CD14-positive monocyte (primary cell): ENCODE measurements at regions of chr1 and their contacts with region 1.

Region 1: GRCh38 chr1:100037927-100038659 is 68.3 kb downstream of the SLC35A3 start:
- DNase-seq: peak; percentile 82 to 88 (median 86)
- H3K4me3 ChIP-seq: peak overlapping the region; percentile 87 to 97 (median 90)
- H3K4me3 Mint-ChIP-seq: peak overlapping the region; percentile 96 to 97
- H3K27ac ChIP-seq: peak overlapping the region; percentile 94 to 97
- H3K27ac Mint-ChIP-seq: peak overlapping the region; percentile 96 to 99 (median 98)
- H3K4me1 ChIP-seq: peaks cover 24 to 28% of the 10 kb centered on the region in 2 donors
- H3K4me1 Mint-ChIP-seq: peaks cover 36% of the 10 kb centered on the region
- H3K27me3 ChIP-seq: no peaks in the 10 kb centered on the region
- H3K27me3 Mint-ChIP-seq: peaks cover 0 to 4% (median 0%) of the 10 kb centered on the region in 3 donors
- CTCF ChIP-seq: no peak

Region 2: GRCh38 chr1:100050139-100050538 is 12.0 kb after region 1 on chr1:
- intact Hi-C with region 1: loop called in 1 of 2 experiments (anchors 1 kb)
- DNase-seq: no peak
- H3K4me3 ChIP-seq: no peak overlapping the region
- H3K4me3 Mint-ChIP-seq: no peak overlapping the region
- H3K27ac ChIP-seq: peak overlapping the region in 1 of 2 donors; percentile 42
- H3K27ac Mint-ChIP-seq: peak overlapping the region in 5 of 7 donors; percentile 40 to 67 (median 54)
- H3K4me1 ChIP-seq: peaks cover 43 to 63% of the 10 kb centered on the region in 2 donors
- H3K4me1 Mint-ChIP-seq: peaks cover 52% of the 10 kb centered on the region
- H3K27me3 ChIP-seq: no peaks in the 10 kb centered on the region
- H3K27me3 Mint-ChIP-seq: no peaks in the 10 kb centered on the region
- CTCF ChIP-seq: no peak

Region 3: GRCh38 chr1:100132566-100133477 is 94.7 kb after region 1 on chr1 and contains the starts of genes SASS6 and TRMT13:
- intact Hi-C with region 1: loop called (anchors 5 kb)
- DNase-seq: peak; percentile 94 to 97 (median 97)
- H3K4me3 ChIP-seq: peak within 1 kb of the TSS; percentile 79 to 99 (median 94)
- H3K4me3 Mint-ChIP-seq: peak within 1 kb of the TSS; percentile 97 to 99
- H3K27ac ChIP-seq: peak within 1 kb of the TSS; percentile 37 to 85
- H3K27ac Mint-ChIP-seq: peak within 1 kb of the TSS; percentile 91 to 97 (median 94)
- H3K4me1 ChIP-seq: peaks cover 14 to 22% of the 10 kb centered on the region in 2 donors
- H3K4me1 Mint-ChIP-seq: peaks cover 21% of the 10 kb centered on the region
- H3K27me3 ChIP-seq: no peaks in the 10 kb centered on the region
- H3K27me3 Mint-ChIP-seq: no peaks in the 10 kb centered on the region
- CTCF ChIP-seq: no peak
- polyA plus RNA-seq, gene SASS6: 0.53 to 0.98 (median 0.93) TPM
- polyA plus RNA-seq, gene TRMT13: 2.2 to 8.1 (median 2.3) TPM

Region 4: DNA sequence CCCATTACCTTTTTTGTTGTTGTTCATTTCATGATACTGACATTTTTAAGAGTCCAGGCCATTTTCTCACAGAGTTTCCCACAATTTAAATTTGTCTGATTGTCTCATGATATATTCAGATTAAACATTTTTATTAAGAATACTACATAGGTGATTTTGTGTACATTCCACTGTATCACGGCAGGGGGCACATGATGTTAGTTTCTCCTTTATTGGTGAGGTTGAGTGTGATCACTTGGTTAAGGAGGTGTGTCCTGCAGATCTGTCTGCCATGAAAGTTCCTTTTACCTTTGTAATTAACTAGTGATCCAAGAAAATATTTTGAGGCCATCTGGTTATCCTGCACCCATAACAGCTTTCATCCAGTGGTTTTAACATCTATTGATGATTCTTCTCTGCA is 239.8 kb after region 1 on chr1:
- intact Hi-C with region 1: no loop called
- DNase-seq: no peak
- H3K4me3 ChIP-seq: no peak overlapping the region
- H3K4me3 Mint-ChIP-seq: no peak overlapping the region
- H3K27ac ChIP-seq: peak overlapping the region in 1 of 2 donors; percentile 12
- H3K27ac Mint-ChIP-seq: no peak overlapping the region
- H3K4me1 ChIP-seq: no peaks in the 10 kb centered on the region
- H3K4me1 Mint-ChIP-seq: no peaks in the 10 kb centered on the region
- H3K27me3 ChIP-seq: no peaks in the 10 kb centered on the region
- H3K27me3 Mint-ChIP-seq: no peaks in the 10 kb centered on the region
- CTCF ChIP-seq: no peak

Region 5: GRCh38 chr1:100895540-100896483 is 857.7 kb after region 1 on chr1 and contains the start of gene SLC30A7:
- intact Hi-C with region 1: loop called in 1 of 2 experiments (anchors 10 kb)
- DNase-seq: peak; percentile 88 to 96 (median 88)
- H3K4me3 ChIP-seq: peak within 1 kb of the TSS; percentile 82 to 95 (median 86)
- H3K4me3 Mint-ChIP-seq: peak within 1 kb of the TSS; percentile 92 to 99
- H3K27ac ChIP-seq: peak within 1 kb of the TSS; percentile 95 to 100
- H3K27ac Mint-ChIP-seq: peak within 1 kb of the TSS; percentile 95 to 100 (median 99)
- H3K4me1 ChIP-seq: peaks cover 6 to 24% of the 10 kb centered on the region in 2 donors
- H3K4me1 Mint-ChIP-seq: peaks cover 25% of the 10 kb centered on the region
- H3K27me3 ChIP-seq: no peaks in the 10 kb centered on the region
- H3K27me3 Mint-ChIP-seq: peaks cover 0 to 3% (median 0%) of the 10 kb centered on the region in 3 donors
- CTCF ChIP-seq: no peak
- polyA plus RNA-seq, gene SLC30A7: 9.2 to 23.3 (median 17.6) TPM